ENCODE measurements at regions of chr6 and their contacts with region 1.

Region 1: DNA sequence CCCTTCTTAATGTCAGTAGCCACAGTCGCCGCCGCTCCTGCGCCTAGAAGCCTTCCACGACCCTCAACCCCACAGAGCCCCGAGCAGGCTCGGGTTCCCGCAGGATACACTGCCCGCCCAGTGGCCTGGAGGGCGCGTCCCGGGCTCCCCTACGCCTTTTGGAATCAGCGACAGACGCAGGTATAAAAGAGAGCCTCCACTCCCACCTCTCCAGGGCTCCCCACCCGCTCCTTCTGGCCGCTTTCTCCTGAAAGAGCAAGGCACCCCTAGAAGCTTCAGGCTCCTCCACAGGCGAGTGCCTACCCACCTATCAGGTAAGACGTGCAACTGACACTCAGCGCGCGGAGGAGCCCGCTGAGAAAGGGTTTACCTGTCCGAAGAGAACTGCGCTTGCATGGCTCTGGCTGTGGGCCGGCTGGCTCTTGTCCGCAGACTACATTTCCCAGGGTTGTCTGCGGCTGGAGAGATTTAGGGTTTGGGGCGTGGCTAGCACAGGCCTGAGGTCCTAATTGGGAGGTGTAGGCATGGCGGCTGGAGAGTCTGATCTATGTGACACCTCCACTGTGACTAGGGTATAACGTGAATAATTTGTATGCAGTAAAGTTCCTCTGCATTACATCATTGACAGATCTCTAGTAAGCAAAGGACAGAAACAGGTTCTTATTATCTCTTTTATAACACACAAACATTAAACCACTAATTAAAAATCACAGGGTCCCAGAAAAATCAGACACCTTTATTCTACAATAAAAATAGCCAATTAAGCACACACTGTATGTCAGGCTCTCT is 13.5 kb upstream of the ZNF391 start:
- DNase-seq: peak; percentile 48 to 88 (median 64)
- ATAC-seq: peak; percentile 95
- H3K4me3 ChIP-seq: peak overlapping the region; percentile 66
- H3K4me3 Mint-ChIP-seq: peak overlapping the region; percentile 92
- H3K27ac ChIP-seq: no peak overlapping the region
- H3K27ac Mint-ChIP-seq: peak overlapping the region; percentile 81
- H3K4me1 ChIP-seq: peaks cover 11% of the 10 kb centered on the region
- H3K4me1 Mint-ChIP-seq: peaks cover 33% of the 10 kb centered on the region
- H3K27me3 ChIP-seq: no peaks in the 10 kb centered on the region
- H3K27me3 Mint-ChIP-seq: peaks cover 7% of the 10 kb centered on the region
- CTCF ChIP-seq: no peak

Region 2: GRCh38 chr6:27414996-27415395 is 40.0 kb after region 1 on chr6:
- CTCF ChIA-PET with region 1: no interaction called
- POLR2A ChIA-PET with region 1: no interaction called
- intact Hi-C with region 1: no loop called
- DNase-seq: no peak
- ATAC-seq: no peak
- H3K4me3 ChIP-seq: no peak overlapping the region
- H3K4me3 Mint-ChIP-seq: no peak overlapping the region
- H3K27ac ChIP-seq: no peak overlapping the region
- H3K27ac Mint-ChIP-seq: no peak overlapping the region
- H3K4me1 ChIP-seq: no peaks in the 10 kb centered on the region
- H3K4me1 Mint-ChIP-seq: no peaks in the 10 kb centered on the region
- H3K27me3 ChIP-seq: peaks cover 3 to 6% of the 10 kb centered on the region in 2 experiments
- H3K27me3 Mint-ChIP-seq: peaks cover 18% of the 10 kb centered on the region
- CTCF ChIP-seq: no peak

Region 3: GRCh38 chr6:27761391-27761790 is 386.4 kb after region 1 on chr6:
- CTCF ChIA-PET with region 1: no interaction called
- POLR2A ChIA-PET with region 1: no interaction called
- intact Hi-C with region 1: loop called in 1 of 2 experiments (anchors 10 kb)
- DNase-seq: peak in 2 of 14 experiments; percentile 11 to 17
- ATAC-seq: peak; percentile 41
- H3K4me3 ChIP-seq: no peak overlapping the region
- H3K4me3 Mint-ChIP-seq: peak overlapping the region; percentile 94
- H3K27ac ChIP-seq: no peak overlapping the region
- H3K27ac Mint-ChIP-seq: peak overlapping the region; percentile 98
- H3K4me1 ChIP-seq: peaks cover 14% of the 10 kb centered on the region
- H3K4me1 Mint-ChIP-seq: peaks cover 40% of the 10 kb centered on the region
- H3K27me3 ChIP-seq: no peaks in the 10 kb centered on the region
- H3K27me3 Mint-ChIP-seq: peaks cover 2% of the 10 kb centered on the region
- CTCF ChIP-seq: no peak